ENCODE measurements at regions of chr7 and their contacts with region 1.

Region 1: DNA sequence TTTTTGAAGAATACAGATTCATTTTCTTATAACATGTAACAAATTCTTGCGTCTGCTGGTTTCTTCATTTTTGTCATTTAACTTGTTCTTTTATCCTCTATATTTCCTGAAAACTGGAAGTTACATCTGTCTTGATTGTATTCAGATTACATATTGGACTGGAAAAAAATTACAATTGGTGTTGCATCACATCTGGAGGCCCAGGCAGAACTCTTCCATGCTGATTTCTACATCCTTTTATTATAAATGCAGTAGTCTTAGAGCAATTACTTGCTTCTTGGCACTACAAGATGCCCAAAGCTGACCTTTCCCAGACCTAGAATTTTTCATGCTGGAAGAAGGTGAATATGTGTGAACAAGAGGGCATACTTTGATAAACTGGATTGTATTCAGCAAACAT is 460.9 kb upstream of the CNTNAP2 start:
- DNase-seq: no peak
- H3K4me3 ChIP-seq: no peak overlapping the region
- H3K4me3 Mint-ChIP-seq: no peak overlapping the region
- H3K27ac Mint-ChIP-seq: no peak overlapping the region
- H3K4me1 ChIP-seq: no peaks in the 10 kb centered on the region
- H3K4me1 Mint-ChIP-seq: no peaks in the 10 kb centered on the region
- H3K27me3 ChIP-seq: no peaks in the 10 kb centered on the region
- H3K27me3 Mint-ChIP-seq: no peaks in the 10 kb centered on the region
- CTCF ChIP-seq: no peak

Region 2: DNA sequence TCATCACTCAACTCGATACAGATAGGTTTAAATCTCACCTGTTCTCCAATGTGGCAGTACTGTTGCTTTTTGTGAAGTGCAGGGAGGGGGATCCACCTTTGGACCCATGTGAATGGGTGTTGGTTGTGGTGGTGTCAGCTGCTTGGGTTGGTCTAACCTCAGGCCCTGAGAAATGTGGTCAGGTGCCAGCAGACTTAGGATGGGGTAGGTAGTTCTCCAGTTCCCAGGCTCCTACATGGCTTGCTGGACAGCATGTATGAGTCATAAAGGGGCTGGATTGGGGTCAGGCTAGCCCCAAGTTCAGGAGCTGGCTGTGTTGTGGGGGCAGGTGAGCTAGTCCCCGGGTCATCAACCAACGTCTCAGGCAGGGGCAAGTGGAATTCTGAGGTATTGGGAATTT is 11.7 kb before region 1 on chr7:
- CTCF ChIA-PET with region 1: no interaction called
- POLR2A ChIA-PET with region 1: no interaction called
- intact Hi-C with region 1: no loop called
- DNase-seq: no peak
- H3K4me3 ChIP-seq: no peak overlapping the region
- H3K4me3 Mint-ChIP-seq: no peak overlapping the region
- H3K27ac Mint-ChIP-seq: no peak overlapping the region
- H3K4me1 ChIP-seq: no peaks in the 10 kb centered on the region
- H3K4me1 Mint-ChIP-seq: no peaks in the 10 kb centered on the region
- H3K27me3 ChIP-seq: no peaks in the 10 kb centered on the region
- H3K27me3 Mint-ChIP-seq: no peaks in the 10 kb centered on the region
- CTCF ChIP-seq: no peak

Region 3: DNA sequence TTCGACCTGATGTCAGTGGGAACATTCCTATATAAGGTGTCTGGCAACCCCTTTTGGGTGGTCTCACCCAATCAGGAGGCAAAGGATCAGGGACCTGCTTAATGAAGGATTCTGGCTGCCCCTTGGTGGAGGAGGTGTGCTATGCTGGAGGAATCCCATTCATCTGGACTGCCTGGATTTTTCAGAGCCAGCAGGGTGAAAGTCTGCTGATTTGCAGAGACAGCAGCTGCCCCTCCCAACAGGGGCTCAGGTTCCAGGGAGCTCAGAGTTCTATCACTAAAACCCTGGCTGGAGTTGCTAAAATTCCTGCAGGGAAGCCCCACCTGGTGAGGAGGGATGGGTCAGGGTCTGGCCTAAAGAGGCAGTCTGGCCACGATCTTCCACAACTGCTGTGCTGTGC is 62.5 kb after region 1 on chr7:
- CTCF ChIA-PET with region 1: no interaction called
- POLR2A ChIA-PET with region 1: no interaction called
- intact Hi-C with region 1: loop called (anchors 1 kb)
- DNase-seq: peak; percentile 56 to 68
- H3K4me3 ChIP-seq: no peak overlapping the region
- H3K4me3 Mint-ChIP-seq: no peak overlapping the region
- H3K27ac Mint-ChIP-seq: peak overlapping the region; percentile 55
- H3K4me1 ChIP-seq: peaks cover 14% of the 10 kb centered on the region
- H3K4me1 Mint-ChIP-seq: no peaks in the 10 kb centered on the region
- H3K27me3 ChIP-seq: no peaks in the 10 kb centered on the region
- H3K27me3 Mint-ChIP-seq: no peaks in the 10 kb centered on the region
- CTCF ChIP-seq: no peak

Region 4: DNA sequence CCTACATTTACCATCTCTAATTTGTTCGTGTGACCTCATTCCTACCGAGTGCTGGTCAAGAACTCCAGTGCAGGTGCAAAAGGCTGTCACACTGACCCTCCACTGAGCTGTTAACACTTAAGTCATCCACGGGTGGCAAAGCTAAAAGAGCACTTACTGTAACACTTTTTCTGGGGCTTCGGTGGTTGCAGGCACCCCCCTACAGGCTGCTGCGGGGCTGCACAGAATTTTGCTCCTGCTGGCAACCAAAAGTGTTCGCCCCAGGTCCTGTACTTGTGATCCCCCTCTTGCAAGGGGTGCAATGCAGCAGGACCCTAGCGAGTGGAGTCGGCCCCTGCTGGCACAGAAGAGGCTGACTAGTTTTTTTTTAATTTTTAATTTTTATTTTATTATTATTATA is 162.0 kb after region 1 on chr7:
- CTCF ChIA-PET with region 1: no interaction called
- POLR2A ChIA-PET with region 1: no interaction called
- intact Hi-C with region 1: loop called (anchors 1 kb)
- DNase-seq: no peak
- H3K4me3 ChIP-seq: no peak overlapping the region
- H3K4me3 Mint-ChIP-seq: no peak overlapping the region
- H3K27ac Mint-ChIP-seq: no peak overlapping the region
- H3K4me1 ChIP-seq: no peaks in the 10 kb centered on the region
- H3K4me1 Mint-ChIP-seq: no peaks in the 10 kb centered on the region
- H3K27me3 ChIP-seq: no peaks in the 10 kb centered on the region
- H3K27me3 Mint-ChIP-seq: no peaks in the 10 kb centered on the region
- CTCF ChIP-seq: no peak

Region 5: DNA sequence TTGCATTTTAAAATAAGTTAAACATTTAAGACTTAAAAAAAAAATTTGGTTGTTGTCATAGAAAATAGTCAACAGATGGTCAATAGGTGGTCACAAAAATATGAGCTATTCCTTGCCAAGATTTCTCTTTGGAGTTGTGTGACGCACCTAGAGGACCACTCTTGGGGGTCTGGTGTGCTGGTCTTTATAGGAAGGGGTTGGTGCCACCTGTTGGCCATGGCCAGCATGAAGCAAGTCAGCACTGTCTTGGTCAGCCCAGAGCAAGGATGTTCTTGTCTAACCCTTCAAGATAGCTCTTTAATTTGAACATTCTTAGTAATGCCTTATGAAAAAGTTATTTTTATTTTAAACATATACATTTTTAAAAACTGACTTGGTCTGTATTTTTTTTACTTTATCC is 193.0 kb after region 1 on chr7:
- CTCF ChIA-PET with region 1: no interaction called
- POLR2A ChIA-PET with region 1: no interaction called
- intact Hi-C with region 1: loop called (anchors 1 kb)
- DNase-seq: peak; percentile 30 to 48
- H3K4me3 ChIP-seq: no peak overlapping the region
- H3K4me3 Mint-ChIP-seq: no peak overlapping the region
- H3K27ac Mint-ChIP-seq: no peak overlapping the region
- H3K4me1 ChIP-seq: no peaks in the 10 kb centered on the region
- H3K4me1 Mint-ChIP-seq: no peaks in the 10 kb centered on the region
- H3K27me3 ChIP-seq: no peaks in the 10 kb centered on the region
- H3K27me3 Mint-ChIP-seq: peaks cover 3% of the 10 kb centered on the region
- CTCF ChIP-seq: peak; percentile 58 to 63

Region 6: DNA sequence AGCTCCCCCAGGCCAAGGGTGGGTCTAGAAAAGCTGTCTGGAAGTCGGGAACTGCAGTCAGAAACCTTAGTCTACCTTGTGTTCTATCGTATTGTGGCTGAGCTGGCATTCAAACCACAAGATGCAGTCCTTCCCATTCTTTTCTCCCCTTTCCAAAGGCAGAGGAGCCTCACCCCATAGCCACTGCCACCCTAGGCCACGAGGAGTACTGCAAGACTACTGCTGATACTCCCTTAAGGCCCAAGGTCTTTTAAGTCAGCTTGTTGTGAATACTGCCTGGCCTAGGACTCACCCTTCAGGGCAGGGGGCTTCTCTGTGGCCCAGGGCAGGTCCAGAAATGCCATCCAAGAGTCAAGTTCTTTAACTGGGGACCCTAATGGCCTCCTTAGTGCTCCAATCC is 246.5 kb after region 1 on chr7:
- CTCF ChIA-PET with region 1: no interaction called
- POLR2A ChIA-PET with region 1: no interaction called
- intact Hi-C with region 1: no loop called
- DNase-seq: peak in 1 of 2 experiments; percentile 11
- H3K4me3 ChIP-seq: no peak overlapping the region
- H3K4me3 Mint-ChIP-seq: no peak overlapping the region
- H3K27ac Mint-ChIP-seq: no peak overlapping the region
- H3K4me1 ChIP-seq: no peaks in the 10 kb centered on the region
- H3K4me1 Mint-ChIP-seq: no peaks in the 10 kb centered on the region
- H3K27me3 ChIP-seq: no peaks in the 10 kb centered on the region
- H3K27me3 Mint-ChIP-seq: no peaks in the 10 kb centered on the region
- CTCF ChIP-seq: peak in 1 of 2 experiments; percentile 21

Region 7: GRCh38 chr7:146090023-146090645 is 434.5 kb after region 1 on chr7:
- CTCF ChIA-PET with region 1: no interaction called
- POLR2A ChIA-PET with region 1: no interaction called
- intact Hi-C with region 1: loop called (anchors 1 kb)
- DNase-seq: peak in 1 of 2 experiments; percentile 32
- H3K4me3 ChIP-seq: no peak overlapping the region
- H3K4me3 Mint-ChIP-seq: no peak overlapping the region
- H3K27ac Mint-ChIP-seq: no peak overlapping the region
- H3K4me1 ChIP-seq: no peaks in the 10 kb centered on the region
- H3K4me1 Mint-ChIP-seq: no peaks in the 10 kb centered on the region
- H3K27me3 ChIP-seq: no peaks in the 10 kb centered on the region
- H3K27me3 Mint-ChIP-seq: no peaks in the 10 kb centered on the region
- CTCF ChIP-seq: peak; percentile 74 to 75